ENCODE measurements at regions of chr7 and their contacts with region 1.

Region 1: DNA sequence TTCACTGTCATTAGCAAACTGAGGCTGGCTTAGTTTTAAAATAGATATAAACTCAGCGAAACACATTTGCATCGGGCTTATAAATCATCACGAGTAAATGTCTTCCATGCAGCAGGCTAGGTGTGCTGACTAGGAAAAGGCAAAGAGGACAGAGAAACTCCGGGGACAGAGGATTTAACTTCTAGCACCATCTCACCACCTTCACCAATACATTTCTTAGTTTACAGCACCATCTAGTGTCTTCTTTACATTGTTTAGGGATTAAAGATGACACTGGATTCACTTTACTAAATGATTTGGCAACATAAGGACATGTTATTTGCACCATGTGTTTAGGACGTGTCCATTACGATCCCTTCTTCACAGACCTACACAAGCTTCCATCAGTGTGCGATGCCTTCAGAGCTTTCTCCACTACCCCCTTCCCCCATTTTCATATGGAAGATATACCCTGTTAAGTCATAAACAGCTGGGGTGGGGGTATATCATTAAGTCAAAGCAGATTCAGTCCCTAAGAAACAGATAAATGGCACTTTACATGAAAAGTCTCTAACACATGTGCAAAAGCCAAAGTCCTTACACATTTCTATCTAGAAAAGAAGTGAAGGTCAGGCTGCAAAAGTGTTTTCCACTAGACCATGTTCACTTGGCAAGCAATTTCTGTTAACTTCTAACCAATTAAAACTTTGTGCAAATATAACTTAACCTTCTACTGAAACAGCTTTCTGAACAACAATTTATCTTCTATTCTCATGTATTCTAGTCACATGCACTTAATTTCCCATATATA is 103.3 kb downstream of the GRB10 start:
- DNase-seq: no peak
- ATAC-seq: peak; percentile 81 to 89 (median 86)
- H3K4me3 ChIP-seq: no peak overlapping the region
- H3K27ac ChIP-seq: peak overlapping the region; percentile 81
- H3K4me1 ChIP-seq: peaks cover 80% of the 10 kb centered on the region
- H3K27me3 ChIP-seq: no peaks in the 10 kb centered on the region
- CTCF ChIP-seq: peak; percentile 46

Region 2: DNA sequence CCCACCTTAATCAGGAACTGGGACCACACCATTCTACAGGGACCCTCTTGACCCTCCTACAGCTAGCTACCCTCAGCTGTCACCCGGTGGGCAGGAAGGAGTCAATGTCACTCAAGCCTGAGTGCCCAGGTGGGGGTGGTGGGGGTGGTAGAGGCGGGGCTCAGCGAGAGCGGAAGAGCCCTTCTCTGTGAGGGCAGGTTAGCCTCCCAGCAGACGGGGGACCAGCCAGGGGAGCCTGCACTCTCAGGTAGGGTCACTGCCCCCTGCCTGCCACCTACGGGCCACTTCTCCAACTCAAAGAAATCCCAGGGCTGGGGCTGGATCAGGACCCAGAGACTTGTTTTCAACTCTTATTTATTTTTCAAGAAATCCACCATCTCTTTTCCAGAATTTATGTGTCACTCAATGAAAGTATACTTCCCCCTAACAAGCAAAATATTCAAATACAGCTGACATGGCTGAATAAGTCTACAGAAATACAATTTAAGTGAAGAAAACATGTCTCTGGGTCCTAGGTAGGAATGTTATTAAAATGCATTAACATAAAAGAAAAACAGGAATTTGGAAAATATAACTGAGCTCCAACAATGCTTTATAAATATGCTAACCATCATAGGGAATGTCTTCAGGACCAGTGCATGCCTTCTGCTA is 50.9 kb before region 1 on chr7:
- intact Hi-C with region 1: loop called in 1 of 2 experiments (anchors 5 kb)
- DNase-seq: peak in 1 of 2 donors; percentile 59
- ATAC-seq: peak; percentile 29 to 51 (median 42)
- H3K4me3 ChIP-seq: peak overlapping the region; percentile 35
- H3K27ac ChIP-seq: peak overlapping the region; percentile 84
- H3K4me1 ChIP-seq: peaks cover 48% of the 10 kb centered on the region
- H3K27me3 ChIP-seq: no peaks in the 10 kb centered on the region
- CTCF ChIP-seq: peak; percentile 6

Region 3: GRCh38 chr7:50641442-50642405 is 37.7 kb before region 1 on chr7:
- intact Hi-C with region 1: loop called in 1 of 2 experiments (anchors 5 kb)
- DNase-seq: peak; percentile 45 to 86
- ATAC-seq: peak; percentile 89 to 91 (median 89)
- H3K4me3 ChIP-seq: peak overlapping the region; percentile 45
- H3K27ac ChIP-seq: peak overlapping the region; percentile 76
- H3K4me1 ChIP-seq: peaks cover 48% of the 10 kb centered on the region
- H3K27me3 ChIP-seq: no peaks in the 10 kb centered on the region
- CTCF ChIP-seq: peak; percentile 42

Region 4: GRCh38 chr7:51067757-51068156 is 388.3 kb after region 1 on chr7:
- intact Hi-C with region 1: loop called in 1 of 2 experiments (anchors 10 kb)
- DNase-seq: peak in 1 of 2 donors; percentile 43
- ATAC-seq: peak; percentile 53 to 81 (median 64)
- H3K4me3 ChIP-seq: no peak overlapping the region
- H3K27ac ChIP-seq: no peak overlapping the region
- H3K4me1 ChIP-seq: peaks cover 7% of the 10 kb centered on the region
- H3K27me3 ChIP-seq: no peaks in the 10 kb centered on the region
- CTCF ChIP-seq: peak; percentile 78